ENCODE measurements at regions of chr13 and their contacts with region 1.

Region 1: GRCh38 chr13:19863323-19864023 is at the start of gene ZMYM5:
- DNase-seq: peak; percentile 99 to 100
- H3K4me3 ChIP-seq: peak within 1 kb of the TSS; percentile 77
- H3K4me3 Mint-ChIP-seq: peak within 1 kb of the TSS; percentile 87
- H3K27ac Mint-ChIP-seq: peak within 1 kb of the TSS; percentile 87
- H3K4me1 ChIP-seq: peaks cover 12% of the 10 kb centered on the region
- H3K4me1 Mint-ChIP-seq: peaks cover 14% of the 10 kb centered on the region
- H3K27me3 ChIP-seq: no peaks in the 10 kb centered on the region
- H3K27me3 Mint-ChIP-seq: no peaks in the 10 kb centered on the region
- CTCF ChIP-seq: no peak
- total RNA-seq, gene ZMYM5: 15.5 and 16.7 TPM in 2 replicates

Region 2: DNA sequence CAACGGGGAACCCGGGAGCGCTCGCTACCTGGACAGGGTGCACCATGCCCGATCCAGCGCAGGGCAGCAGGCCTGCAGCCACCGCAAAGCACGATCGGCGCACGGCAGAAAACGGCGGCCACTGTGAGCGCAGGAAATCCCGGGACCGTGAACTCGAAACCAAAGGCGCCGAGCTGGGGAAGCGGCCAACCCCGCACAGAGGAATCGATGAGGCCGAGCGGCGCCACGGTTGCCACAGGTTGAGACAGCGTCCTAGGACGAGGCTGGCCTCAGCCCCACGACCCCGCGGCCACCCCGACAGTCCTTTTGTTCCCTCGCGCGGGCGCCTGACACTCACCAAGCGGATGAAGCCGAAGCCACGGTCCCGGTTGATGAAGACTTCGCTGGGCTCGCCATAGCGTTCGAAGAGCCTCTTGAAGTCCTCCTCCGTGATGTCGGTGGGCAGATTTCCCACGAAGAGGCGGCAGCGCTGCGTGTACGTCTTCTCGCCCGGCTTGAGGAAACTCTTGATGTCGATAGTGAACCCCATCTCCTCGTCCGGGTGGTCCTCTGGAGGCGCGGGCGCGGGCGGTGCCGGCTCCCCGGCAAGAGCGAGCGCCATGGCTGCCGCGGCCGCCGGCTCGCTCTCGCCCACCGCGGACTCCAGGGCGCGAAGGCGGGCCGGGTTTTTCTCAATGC is 81.3 kb before region 1 on chr13:
- CTCF ChIA-PET with region 1: interaction called, 5 read pairs
- POLR2A ChIA-PET with region 1: interaction called, 11 read pairs
- intact Hi-C with region 1: loop called (anchors 1 kb)
- DNase-seq: peak; percentile 43 to 60
- H3K4me3 ChIP-seq: peak overlapping the region; percentile 81
- H3K4me3 Mint-ChIP-seq: peak overlapping the region; percentile 94
- H3K27ac Mint-ChIP-seq: peak overlapping the region; percentile 93
- H3K4me1 ChIP-seq: no peaks in the 10 kb centered on the region
- H3K4me1 Mint-ChIP-seq: peaks cover 8% of the 10 kb centered on the region
- H3K27me3 ChIP-seq: no peaks in the 10 kb centered on the region
- H3K27me3 Mint-ChIP-seq: no peaks in the 10 kb centered on the region
- CTCF ChIP-seq: no peak

Region 3: DNA sequence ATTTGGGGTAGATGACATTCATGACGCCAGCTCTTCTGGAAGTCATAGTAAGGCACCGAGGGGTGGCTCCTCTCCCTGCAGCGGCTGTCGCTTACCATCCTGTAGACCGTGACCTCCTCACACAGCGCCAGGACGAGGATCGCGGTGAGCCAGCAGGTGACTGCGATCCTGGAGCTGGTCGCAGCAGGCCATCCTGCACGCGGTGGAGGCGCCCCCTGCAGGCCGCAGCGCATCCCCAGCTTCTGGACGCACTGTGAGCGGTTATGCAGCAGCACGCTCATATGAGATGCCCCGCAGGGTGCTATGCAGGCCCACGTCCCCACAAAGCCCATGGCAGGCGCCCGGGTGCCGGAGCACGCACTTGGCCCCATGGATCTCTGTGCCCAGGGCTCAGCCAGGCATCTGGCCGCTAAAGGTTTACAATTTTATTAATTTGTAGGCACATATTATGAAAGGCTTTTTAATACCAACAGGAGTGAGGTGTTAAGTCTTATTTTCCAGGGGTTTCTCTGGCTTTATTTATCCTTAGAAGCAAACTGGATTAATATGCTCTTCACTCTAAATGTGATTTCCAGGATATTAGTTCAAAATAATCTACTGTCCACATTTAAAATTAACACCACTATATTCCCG is 45.1 kb before region 1 on chr13:
- CTCF ChIA-PET with region 1: no interaction called
- POLR2A ChIA-PET with region 1: interaction called, 3 read pairs
- intact Hi-C with region 1: loop called (anchors 5 kb)
- DNase-seq: peak; percentile 68 to 75
- H3K4me3 ChIP-seq: no peak overlapping the region
- H3K4me3 Mint-ChIP-seq: no peak overlapping the region
- H3K27ac Mint-ChIP-seq: peak overlapping the region; percentile 49
- H3K4me1 ChIP-seq: no peaks in the 10 kb centered on the region; the same call in 1 of the 2 replicates
- H3K4me1 Mint-ChIP-seq: peaks cover 11% of the 10 kb centered on the region
- H3K27me3 ChIP-seq: no peaks in the 10 kb centered on the region
- H3K27me3 Mint-ChIP-seq: no peaks in the 10 kb centered on the region
- CTCF ChIP-seq: peak; percentile 36 to 71

Region 4: DNA sequence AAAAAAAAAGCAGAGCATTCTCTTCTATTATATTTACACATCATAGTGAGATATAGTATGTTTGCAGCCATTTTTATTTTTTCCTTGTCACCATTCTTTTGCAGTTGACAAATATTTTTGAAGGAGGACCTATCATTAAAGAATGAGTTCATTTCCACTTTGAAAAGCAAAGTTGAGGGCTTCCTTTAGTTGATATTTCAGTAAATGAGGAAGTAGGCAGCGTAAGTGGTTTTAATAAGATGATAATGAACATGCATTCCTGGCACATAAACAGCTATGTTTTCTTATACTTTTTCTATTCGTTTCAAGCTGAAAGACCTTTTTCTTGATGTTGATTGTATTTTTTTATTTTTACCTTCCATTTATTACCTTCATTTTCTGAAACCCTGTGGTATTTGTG is 161.2 kb after region 1 on chr13:
- CTCF ChIA-PET with region 1: no interaction called
- POLR2A ChIA-PET with region 1: no interaction called
- intact Hi-C with region 1: no loop called
- DNase-seq: no peak
- H3K4me3 ChIP-seq: no peak overlapping the region
- H3K4me3 Mint-ChIP-seq: no peak overlapping the region
- H3K27ac Mint-ChIP-seq: no peak overlapping the region
- H3K4me1 ChIP-seq: no peaks in the 10 kb centered on the region
- H3K4me1 Mint-ChIP-seq: peaks cover 8% of the 10 kb centered on the region
- H3K27me3 ChIP-seq: no peaks in the 10 kb centered on the region
- H3K27me3 Mint-ChIP-seq: no peaks in the 10 kb centered on the region
- CTCF ChIP-seq: no peak

Region 5: DNA sequence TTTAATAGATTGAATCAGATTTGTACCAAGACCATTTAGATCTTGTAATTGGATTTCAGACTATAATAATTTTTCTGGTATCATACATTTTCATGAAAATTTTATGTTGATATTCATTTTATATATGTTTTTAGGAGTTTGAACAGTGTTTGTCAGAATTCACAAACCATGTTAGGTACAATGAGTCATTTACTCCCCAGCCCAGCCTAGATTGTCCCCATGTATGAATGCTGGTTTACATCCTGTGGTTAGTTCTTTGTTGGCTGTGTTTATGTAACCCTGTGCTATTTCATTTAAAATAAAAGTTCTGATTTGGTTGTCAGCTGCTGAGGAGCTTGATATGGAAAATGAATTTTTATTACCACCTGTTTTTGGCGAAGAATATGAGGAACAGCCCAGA is 200.7 kb after region 1 on chr13:
- CTCF ChIA-PET with region 1: no interaction called
- POLR2A ChIA-PET with region 1: no interaction called
- intact Hi-C with region 1: loop called (anchors 10 kb)
- DNase-seq: no peak
- H3K4me3 ChIP-seq: no peak overlapping the region
- H3K4me3 Mint-ChIP-seq: no peak overlapping the region
- H3K27ac Mint-ChIP-seq: no peak overlapping the region
- H3K4me1 ChIP-seq: no peaks in the 10 kb centered on the region
- H3K4me1 Mint-ChIP-seq: no peaks in the 10 kb centered on the region
- H3K27me3 ChIP-seq: no peaks in the 10 kb centered on the region
- H3K27me3 Mint-ChIP-seq: no peaks in the 10 kb centered on the region
- CTCF ChIP-seq: no peak

Measured in Caco-2 (cell line).